ENCODE measurements at regions of chr13 and their contacts with region 1.

Region 1: DNA sequence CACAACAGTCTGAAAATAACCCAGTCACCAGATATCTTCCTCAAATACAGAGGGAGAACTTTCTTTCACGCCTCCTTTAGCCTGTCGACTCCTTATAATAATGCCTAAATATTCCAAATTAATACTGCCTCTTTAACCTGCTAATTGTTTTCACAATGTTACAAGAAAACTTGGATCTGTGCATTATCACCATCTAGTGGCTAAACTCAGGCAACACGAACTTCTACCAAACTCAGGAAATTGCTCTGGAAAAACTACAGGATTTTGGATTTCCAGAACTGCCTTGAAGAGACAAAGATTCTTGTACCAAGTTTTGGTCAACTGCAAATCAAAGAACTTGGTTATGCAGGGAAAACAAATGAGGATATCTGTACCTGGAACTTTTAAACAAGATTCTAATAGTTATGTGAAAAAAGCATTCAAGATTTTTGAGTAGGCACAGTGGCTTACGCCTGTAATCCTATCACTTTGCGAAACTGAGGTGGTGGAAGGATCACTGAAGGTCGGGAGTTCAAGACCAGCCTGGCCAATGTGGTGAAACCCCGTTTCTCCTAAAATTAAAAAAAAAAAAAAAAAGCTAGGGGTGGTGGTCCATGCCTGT is 10.8 kb downstream of the CLN5 start:
- DNase-seq: no peak
- ATAC-seq: no peak
- H3K4me3 Mint-ChIP-seq: no peak overlapping the region
- H3K27ac Mint-ChIP-seq: peak overlapping the region; percentile 65
- H3K4me1 Mint-ChIP-seq: peaks cover 44% of the 10 kb centered on the region
- H3K27me3 Mint-ChIP-seq: no peaks in the 10 kb centered on the region

Region 2: GRCh38 chr13:76944456-76944855 is 58.2 kb before region 1 on chr13:
- CTCF ChIA-PET with region 1: no interaction called
- POLR2A ChIA-PET with region 1: no interaction called
- intact Hi-C with region 1: no loop called
- DNase-seq: no peak
- ATAC-seq: no peak
- H3K4me3 Mint-ChIP-seq: no peak overlapping the region
- H3K27ac Mint-ChIP-seq: no peak overlapping the region
- H3K4me1 Mint-ChIP-seq: no peaks in the 10 kb centered on the region
- H3K27me3 Mint-ChIP-seq: no peaks in the 10 kb centered on the region

Region 3: GRCh38 chr13:76991796-76992547 is 10.7 kb before region 1 on chr13 and contains the start of gene CLN5:
- CTCF ChIA-PET with region 1: interaction called, 29 read pairs
- POLR2A ChIA-PET with region 1: interaction called, 4 read pairs
- intact Hi-C with region 1: no loop called
- DNase-seq: peak; percentile 97
- ATAC-seq: peak; percentile 93
- H3K4me3 Mint-ChIP-seq: peak within 1 kb of the TSS; percentile 97
- H3K27ac Mint-ChIP-seq: peak within 1 kb of the TSS; percentile 99
- H3K4me1 Mint-ChIP-seq: peaks cover 36% of the 10 kb centered on the region
- H3K27me3 Mint-ChIP-seq: peaks cover 3% of the 10 kb centered on the region
- total RNA-seq, gene CLN5: 14.5 to 14.9 TPM

Region 4: DNA sequence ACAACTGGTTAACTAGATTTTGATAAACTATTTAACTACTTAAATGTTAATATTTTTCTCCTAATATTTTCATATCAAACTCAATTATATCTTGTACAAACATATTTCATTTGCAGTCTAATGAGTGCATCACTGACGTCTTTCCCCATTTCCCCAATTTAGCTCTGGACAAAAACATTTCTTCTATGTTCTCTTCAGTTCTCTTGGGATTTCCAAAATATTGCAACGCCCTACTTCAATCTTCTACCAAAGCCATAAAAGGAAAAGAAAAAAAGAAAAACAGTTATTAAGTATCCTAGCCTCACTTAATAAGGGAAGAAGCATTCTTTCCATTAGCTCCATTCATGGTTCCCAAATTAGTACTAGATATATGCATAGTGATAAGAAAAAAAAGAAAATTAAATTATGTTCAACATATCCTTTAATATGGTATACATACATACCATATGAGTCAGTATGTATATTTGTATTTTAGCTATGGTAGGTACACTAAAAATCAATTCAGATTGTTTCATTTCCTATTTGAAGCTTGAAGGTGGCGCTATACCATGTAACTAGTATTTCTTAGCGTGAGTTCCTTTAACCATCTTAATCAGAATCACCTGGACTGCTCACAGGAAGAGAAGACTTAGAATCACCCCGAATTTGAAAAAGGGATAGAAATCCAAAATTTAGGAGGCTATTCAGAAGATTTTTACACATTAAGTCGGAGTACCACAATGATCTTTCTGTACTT is 14.4 kb after region 1 on chr13:
- CTCF ChIA-PET with region 1: interaction called, 11 read pairs
- POLR2A ChIA-PET with region 1: no interaction called
- intact Hi-C with region 1: no loop called
- DNase-seq: no peak
- ATAC-seq: no peak
- H3K4me3 Mint-ChIP-seq: no peak overlapping the region
- H3K27ac Mint-ChIP-seq: no peak overlapping the region
- H3K4me1 Mint-ChIP-seq: peaks cover 55% of the 10 kb centered on the region
- H3K27me3 Mint-ChIP-seq: no peaks in the 10 kb centered on the region

Measured in activated CD4-positive, alpha-beta T cell treated with anti-CD3 and anti-CD28 coated beads for 36 hours (primary cell).